Left ventricle myocardium inferior (tissue), 1 donor: ENCODE measurements at regions of chr10 and their contacts with region 1.

Region 1: DNA sequence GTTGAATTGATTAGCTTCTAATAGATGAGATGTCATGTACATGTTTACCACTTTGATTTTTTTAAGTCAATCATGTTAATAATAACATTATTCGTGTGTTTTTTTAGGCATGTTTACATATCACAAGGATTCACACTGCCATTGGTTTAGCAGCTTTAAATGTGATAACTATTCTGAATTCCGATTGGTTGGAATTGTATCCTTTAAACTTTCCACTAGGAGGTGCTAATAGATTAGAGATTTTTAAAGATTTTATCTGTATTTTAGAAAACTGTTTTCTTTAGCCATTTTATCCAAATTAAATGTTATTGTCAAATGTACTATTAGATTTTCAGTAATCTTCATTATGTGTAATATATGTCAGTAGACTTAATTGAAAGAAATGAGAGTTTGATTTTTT is 83.2 kb downstream of the HECTD2 start:
- DNase-seq: no peak
- H3K4me3 ChIP-seq: no peak overlapping the region
- H3K27ac ChIP-seq: no peak overlapping the region
- H3K4me1 ChIP-seq: peaks cover 5% of the 10 kb centered on the region
- H3K27me3 ChIP-seq: no peaks in the 10 kb centered on the region
- CTCF ChIP-seq: peak; percentile 65

Region 2: DNA sequence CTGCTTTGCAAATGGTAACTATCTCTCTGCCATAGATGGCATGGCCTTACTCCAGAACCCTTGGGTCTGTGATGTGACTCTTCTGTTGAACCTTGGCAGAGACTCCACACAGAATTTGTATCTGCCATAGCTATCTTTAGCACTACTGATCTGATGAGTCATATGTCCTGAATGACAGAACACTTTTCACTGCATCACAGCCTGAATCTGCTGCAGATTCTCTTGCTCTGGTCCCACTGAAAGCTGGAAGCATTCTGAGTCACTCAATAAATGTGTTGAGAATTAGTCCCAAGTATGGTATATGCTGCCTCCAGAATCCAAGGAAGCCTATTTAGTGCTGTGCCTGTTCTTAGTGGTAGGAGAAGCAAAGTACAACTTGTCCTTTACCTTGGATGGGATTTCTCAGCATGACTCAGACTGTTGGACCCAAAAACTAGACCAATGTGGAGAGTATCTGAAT is 532.9 kb before region 1 on chr10:
- intact Hi-C with region 1: no loop called
- DNase-seq: no peak
- H3K4me3 ChIP-seq: no peak overlapping the region
- H3K27ac ChIP-seq: peak overlapping the region; percentile 11
- H3K4me1 ChIP-seq: peaks cover 28% of the 10 kb centered on the region
- H3K27me3 ChIP-seq: no peaks in the 10 kb centered on the region
- CTCF ChIP-seq: no peak

Region 3: DNA sequence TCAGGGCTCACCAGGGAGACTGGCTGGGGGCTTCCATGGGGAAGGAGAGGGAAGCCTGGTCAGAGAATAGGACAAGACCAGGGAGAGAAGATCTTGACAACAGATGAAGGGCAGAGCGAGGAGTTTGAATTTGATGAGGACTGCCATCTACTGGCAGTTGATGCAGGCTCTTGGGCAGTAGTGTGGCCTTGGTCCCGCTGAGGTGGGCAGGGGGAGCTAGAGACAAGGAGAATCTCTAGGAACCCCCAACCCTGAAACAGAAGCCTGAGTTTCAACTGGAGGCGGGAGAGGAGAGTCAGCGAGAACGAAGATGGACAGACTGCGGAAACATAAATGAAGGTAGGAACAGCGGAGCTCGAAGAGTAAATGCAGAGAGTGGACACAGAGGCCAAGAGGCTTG is 58.5 kb after region 1 on chr10:
- intact Hi-C with region 1: loop called (anchors 10 kb)
- DNase-seq: peak; percentile 37
- H3K4me3 ChIP-seq: peak overlapping the region; percentile 42
- H3K27ac ChIP-seq: peak overlapping the region; percentile 56
- H3K4me1 ChIP-seq: peaks cover 29% of the 10 kb centered on the region
- H3K27me3 ChIP-seq: no peaks in the 10 kb centered on the region
- CTCF ChIP-seq: peak; percentile 75